Astrocyte of the cerebellum (primary cell): ENCODE measurements at regions of chr16 and their contacts with region 1.

Region 1: GRCh38 chr16:1929578-1930337 is 11.5 kb upstream of the HS3ST6 start:
- DNase-seq: peak; percentile 37
- H3K4me3 ChIP-seq: peak overlapping the region; percentile 45
- CTCF ChIP-seq: peak; percentile 75

Region 2: GRCh38 chr16:1850981-1851380 is 78.8 kb before region 1 on chr16:
- in situ Hi-C with region 1: loop called (anchors 5 kb)
- DNase-seq: no peak
- H3K4me3 ChIP-seq: no peak overlapping the region
- CTCF ChIP-seq: no peak